ENCODE measurements at regions of chr1 and their contacts with region 1.

Region 1: DNA sequence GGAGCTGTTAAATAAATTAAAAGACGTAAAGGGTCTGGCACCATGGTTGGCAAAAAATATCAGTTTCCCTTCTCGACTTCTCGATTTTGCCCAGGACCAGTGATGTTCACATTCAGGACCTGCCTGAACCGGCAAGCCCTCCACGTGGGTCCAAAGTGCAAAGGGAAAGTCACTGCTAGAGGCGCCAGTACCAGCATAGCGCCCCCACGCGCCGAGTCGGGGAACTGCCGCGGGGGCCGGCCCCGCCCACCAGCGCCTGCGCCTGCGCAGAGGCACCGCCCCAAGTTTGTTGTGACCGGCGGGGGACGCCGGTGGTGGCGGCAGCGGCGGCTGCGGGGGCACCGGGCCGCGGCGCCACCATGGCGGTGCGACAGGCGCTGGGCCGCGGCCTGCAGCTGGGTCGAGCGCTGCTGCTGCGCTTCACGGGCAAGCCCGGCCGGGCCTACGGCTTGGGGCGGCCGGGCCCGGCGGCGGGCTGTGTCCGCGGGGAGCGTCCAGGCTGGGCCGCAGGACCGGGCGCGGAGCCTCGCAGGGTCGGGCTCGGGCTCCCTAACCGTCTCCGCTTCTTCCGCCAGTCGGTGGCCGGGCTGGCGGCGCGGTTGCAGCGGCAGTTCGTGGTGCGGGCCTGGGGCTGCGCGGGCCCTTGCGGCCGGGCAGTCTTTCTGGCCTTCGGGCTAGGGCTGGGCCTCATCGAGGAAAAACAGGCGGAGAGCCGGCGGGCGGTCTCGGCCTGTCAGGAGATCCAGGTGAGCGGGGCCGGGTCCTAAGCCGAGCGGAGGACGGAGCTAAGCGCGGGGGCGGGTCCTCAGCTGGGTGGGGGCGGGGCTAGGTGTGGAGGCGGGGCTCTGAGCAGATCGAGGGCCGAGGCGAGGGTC is at the start of gene PINK1:
- DNase-seq: peak; percentile 87 to 97 (median 90)
- ATAC-seq: peak; percentile 94
- H3K4me3 ChIP-seq: peak within 1 kb of the TSS; percentile 97
- H3K4me1 ChIP-seq: peaks cover 14% of the 10 kb centered on the region
- CTCF ChIP-seq: peak; percentile 100
- total RNA-seq, gene PINK1: 75.4 to 141 (median 111) TPM

Region 2: DNA sequence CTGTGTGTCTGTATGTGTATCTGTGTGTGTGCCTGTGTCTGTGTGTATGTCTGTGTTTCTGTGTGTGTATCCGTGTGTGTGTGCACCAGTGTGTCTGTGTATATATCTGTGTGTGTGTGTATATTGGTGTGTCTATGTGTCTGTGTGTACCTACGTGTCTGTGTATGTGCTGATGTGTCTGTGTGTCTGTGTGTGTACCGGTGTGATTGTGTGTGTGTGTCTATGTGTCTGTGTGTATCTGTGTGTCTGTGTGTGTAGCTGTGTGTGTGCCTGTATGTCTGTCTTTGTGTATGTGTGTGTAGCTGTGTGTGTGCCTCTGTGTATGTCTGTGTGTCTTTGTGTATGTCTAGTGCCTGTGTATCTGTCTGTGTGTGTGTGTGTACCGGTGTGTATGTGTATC is 179.4 kb before region 1 on chr1:
- intact Hi-C with region 1: no loop called
- DNase-seq: no peak
- ATAC-seq: no peak
- H3K4me3 ChIP-seq: no peak overlapping the region
- H3K4me1 ChIP-seq: no peaks in the 10 kb centered on the region
- CTCF ChIP-seq: no peak

Region 3: GRCh38 chr1:20574686-20575540 is 58.5 kb before region 1 on chr1:
- intact Hi-C with region 1: loop called in 1 of 2 experiments (anchors 10 kb)
- DNase-seq: peak; percentile 82 to 96 (median 94)
- ATAC-seq: peak; percentile 99
- H3K4me3 ChIP-seq: no peak overlapping the region
- H3K4me1 ChIP-seq: no peaks in the 10 kb centered on the region
- CTCF ChIP-seq: peak; percentile 68

Region 4: DNA sequence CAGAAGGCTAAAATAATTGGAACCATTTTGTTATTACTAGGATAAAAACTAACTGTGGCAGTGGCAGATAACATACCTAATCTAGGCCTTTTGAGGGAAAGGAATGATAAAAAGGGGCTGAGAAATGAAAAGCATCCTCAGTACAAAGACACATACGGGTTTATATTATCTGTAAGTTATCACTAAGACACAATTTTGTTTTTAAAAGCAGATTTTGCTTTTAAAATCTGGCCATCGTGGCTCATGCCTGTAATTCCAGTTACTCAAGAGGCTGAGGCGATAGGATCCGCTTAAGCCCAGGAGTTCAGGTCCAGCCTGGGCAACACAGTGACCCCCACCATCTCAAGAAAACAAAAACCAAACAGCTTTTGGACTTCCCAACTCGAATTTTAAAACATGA is 178.5 kb after region 1 on chr1:
- intact Hi-C with region 1: no loop called
- DNase-seq: no peak
- ATAC-seq: no peak
- H3K4me3 ChIP-seq: no peak overlapping the region
- H3K4me1 ChIP-seq: no peaks in the 10 kb centered on the region
- CTCF ChIP-seq: no peak

Measured in mucosa of descending colon (tissue), 3 donors.